ENCODE measurements at regions of chr3 and their contacts with region 1.

Region 1: DNA sequence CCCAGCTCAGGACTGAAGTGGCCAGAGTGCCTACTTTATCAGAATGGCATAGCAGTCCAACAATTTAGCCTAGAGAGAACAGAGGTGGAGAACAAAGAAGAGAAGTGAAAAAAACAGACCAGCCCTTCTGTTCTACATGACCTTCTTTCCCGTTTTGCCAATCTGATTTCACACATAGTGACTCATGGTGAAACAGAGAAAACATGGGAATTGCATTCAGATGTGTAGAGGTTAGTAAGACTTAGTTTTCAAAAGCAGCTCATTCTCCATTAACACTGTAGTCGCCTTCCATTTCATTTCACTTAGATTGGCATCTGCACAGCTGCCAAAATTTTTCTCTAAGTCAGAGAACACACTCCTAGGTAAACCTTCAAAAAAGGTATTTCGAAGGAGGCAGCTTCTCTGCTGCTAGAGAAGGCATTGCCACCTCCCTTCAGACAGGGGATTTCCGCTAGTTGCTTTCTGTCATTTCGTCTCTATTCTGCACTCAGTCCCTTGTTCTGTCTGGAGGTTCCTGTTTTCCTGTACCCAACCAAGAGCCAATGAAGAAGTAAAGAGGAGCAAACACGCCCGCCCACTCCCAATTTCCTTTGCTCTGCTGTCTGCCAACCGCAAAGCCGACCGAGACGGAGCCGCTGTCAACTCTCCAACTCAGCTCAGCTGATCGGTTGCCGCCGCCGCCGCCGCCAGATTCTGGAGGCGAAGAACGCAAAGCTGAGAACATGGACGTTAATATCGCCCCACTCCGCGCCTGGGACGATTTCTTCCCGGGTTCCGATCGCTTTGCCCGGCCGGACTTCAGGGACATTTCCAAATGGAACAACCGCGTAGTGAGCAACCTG is at the start of gene ARL6IP5:
- DNase-seq: peak; percentile 53 to 91 (median 66)
- ATAC-seq: peak; percentile 75
- H3K4me3 ChIP-seq: peak within 1 kb of the TSS; percentile 88
- H3K27ac ChIP-seq: peak within 1 kb of the TSS; percentile 83
- H3K4me1 ChIP-seq: peaks cover 9 to 36% of the 10 kb centered on the region in 2 experiments
- H3K27me3 ChIP-seq: no peaks in the 10 kb centered on the region
- CTCF ChIP-seq: no peak
- EP300 ChIP-seq: no peak
- POLR2A ChIP-seq: peak; percentile 49; the same call in 1 of the 2 replicates
- RAD21 ChIP-seq: 0 out of 4 replicates have a peak, but pooled peaks of 1 of the 2 experiments have one; percentile 10
- polyA plus RNA-seq, gene ARL6IP5: 51.8 to 54.0 TPM

Region 2: GRCh38 chr3:68515237-68515636 is 569.3 kb before region 1 on chr3:
- CTCF ChIA-PET with region 1: no interaction called
- POLR2A ChIA-PET with region 1: no interaction called
- in situ Hi-C with region 1: no loop called
- intact Hi-C with region 1: no loop called
- DNase-seq: no peak
- ATAC-seq: no peak
- H3K4me3 ChIP-seq: no peak overlapping the region
- H3K27ac ChIP-seq: no peak overlapping the region
- H3K4me1 ChIP-seq: no peaks in the 10 kb centered on the region
- H3K27me3 ChIP-seq: no peaks in the 10 kb centered on the region
- CTCF ChIP-seq: no peak
- EP300 ChIP-seq: no peak
- POLR2A ChIP-seq: no peak
- RAD21 ChIP-seq: no peak

Region 3: GRCh38 chr3:68880632-68881031 is 203.9 kb before region 1 on chr3:
- CTCF ChIA-PET with region 1: no interaction called
- POLR2A ChIA-PET with region 1: no interaction called
- in situ Hi-C with region 1: no loop called
- intact Hi-C with region 1: no loop called
- DNase-seq: no peak
- ATAC-seq: no peak
- H3K4me3 ChIP-seq: no peak overlapping the region
- H3K27ac ChIP-seq: no peak overlapping the region
- H3K4me1 ChIP-seq: no peaks in the 10 kb centered on the region
- H3K27me3 ChIP-seq: no peaks in the 10 kb centered on the region
- CTCF ChIP-seq: no peak
- EP300 ChIP-seq: no peak
- POLR2A ChIP-seq: no peak
- RAD21 ChIP-seq: no peak

Region 4: GRCh38 chr3:69013253-69014021 is 71.1 kb before region 1 on chr3 and contains the start of gene EOGT:
- CTCF ChIA-PET with region 1: no interaction called
- POLR2A ChIA-PET with region 1: no interaction called
- in situ Hi-C with region 1: no loop called
- intact Hi-C with region 1: loop called (anchors 2 kb)
- DNase-seq: peak; percentile 78 to 86 (median 82)
- ATAC-seq: peak; percentile 91
- H3K4me3 ChIP-seq: peak within 1 kb of the TSS; percentile 79
- H3K27ac ChIP-seq: peak within 1 kb of the TSS; percentile 84
- H3K4me1 ChIP-seq: peaks cover 11 to 17% of the 10 kb centered on the region in 2 experiments
- H3K27me3 ChIP-seq: no peaks in the 10 kb centered on the region
- CTCF ChIP-seq: peak; percentile 62 to 86 (median 70)
- EP300 ChIP-seq: no peak
- POLR2A ChIP-seq: peak; percentile 78
- RAD21 ChIP-seq: peak; percentile 20 to 23; a peak in 3 of 4 replicates
- polyA plus RNA-seq, gene EOGT: 3.6 to 5.1 TPM

Region 5: DNA sequence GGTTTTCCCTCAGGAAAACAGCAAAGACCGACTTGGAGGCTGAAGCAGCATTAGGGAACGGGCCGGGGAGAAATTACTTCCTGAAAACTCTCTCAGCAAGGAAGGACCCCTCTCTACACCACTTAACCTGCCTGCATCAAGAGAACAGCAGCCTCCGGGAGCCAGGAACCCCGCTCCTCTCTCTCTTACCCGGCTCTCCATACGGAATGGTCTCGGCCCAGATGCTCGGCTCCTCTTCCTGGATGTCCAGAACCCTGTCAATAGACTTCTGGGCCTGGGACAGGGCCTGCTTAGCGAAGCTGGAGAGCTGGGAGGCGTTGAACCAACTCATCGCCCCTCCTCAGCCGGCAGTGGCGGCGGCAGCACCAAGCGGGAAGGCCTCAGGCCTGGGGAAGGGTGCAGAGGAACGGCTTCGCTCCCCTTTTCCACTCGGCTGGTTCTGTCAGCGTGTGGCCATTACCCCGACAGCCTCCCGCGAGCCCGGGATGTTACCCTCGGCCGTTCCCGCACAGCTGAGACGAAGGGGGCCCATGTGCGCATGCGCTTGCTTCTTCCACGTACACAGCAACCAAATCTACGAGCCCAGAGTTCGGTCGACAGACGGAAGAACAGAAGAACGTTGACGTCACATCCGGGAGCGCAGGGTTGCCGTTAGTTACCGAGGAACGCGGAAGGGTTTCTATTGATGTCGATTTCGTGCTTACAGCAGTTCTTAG is 32.6 kb before region 1 on chr3 and contains the start of gene TMF1:
- CTCF ChIA-PET with region 1: no interaction called
- POLR2A ChIA-PET with region 1: no interaction called
- in situ Hi-C with region 1: no loop called
- intact Hi-C with region 1: loop called (anchors 1 kb)
- DNase-seq: peak; percentile 89 to 96 (median 90)
- ATAC-seq: peak; percentile 92
- H3K4me3 ChIP-seq: peak within 1 kb of the TSS; percentile 93
- H3K27ac ChIP-seq: peak within 1 kb of the TSS; percentile 95
- H3K4me1 ChIP-seq: peaks cover 0 to 7% of the 10 kb centered on the region in 2 experiments; a peak in 2 of 5 replicates
- H3K27me3 ChIP-seq: no peaks in the 10 kb centered on the region
- CTCF ChIP-seq: no peak
- EP300 ChIP-seq: no peak
- POLR2A ChIP-seq: peak; percentile 76
- RAD21 ChIP-seq: no peak
- polyA plus RNA-seq, gene TMF1: 3.1 to 3.7 TPM

Region 6: DNA sequence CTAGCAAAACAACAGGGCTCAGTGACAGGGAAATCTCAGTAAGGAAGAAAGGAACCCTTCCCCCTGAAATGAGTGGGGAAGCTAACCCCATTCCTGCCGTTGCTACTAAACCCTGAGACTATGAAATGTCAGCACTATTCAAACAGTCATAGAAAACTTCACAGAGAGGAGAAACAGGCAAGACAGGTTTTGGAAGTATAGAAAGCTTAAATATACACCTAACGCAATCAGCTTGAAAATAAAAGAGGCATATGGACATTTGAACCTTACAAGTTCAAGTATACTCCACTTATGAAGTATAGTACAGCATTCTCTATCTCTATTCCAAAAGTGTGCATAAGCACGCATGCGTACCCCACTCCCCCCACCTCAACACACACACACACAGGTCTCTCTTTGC is 318.9 kb after region 1 on chr3:
- CTCF ChIA-PET with region 1: no interaction called
- POLR2A ChIA-PET with region 1: no interaction called
- in situ Hi-C with region 1: no loop called
- intact Hi-C with region 1: no loop called
- DNase-seq: no peak
- ATAC-seq: no peak
- H3K4me3 ChIP-seq: no peak overlapping the region
- H3K27ac ChIP-seq: no peak overlapping the region
- H3K4me1 ChIP-seq: no peaks in the 10 kb centered on the region
- H3K27me3 ChIP-seq: no peaks in the 10 kb centered on the region
- CTCF ChIP-seq: no peak
- EP300 ChIP-seq: no peak
- POLR2A ChIP-seq: no peak
- RAD21 ChIP-seq: no peak

Measured in K562 (cell line).